ENCODE measurements at regions of chr20 and their contacts with region 1.

Region 1: DNA sequence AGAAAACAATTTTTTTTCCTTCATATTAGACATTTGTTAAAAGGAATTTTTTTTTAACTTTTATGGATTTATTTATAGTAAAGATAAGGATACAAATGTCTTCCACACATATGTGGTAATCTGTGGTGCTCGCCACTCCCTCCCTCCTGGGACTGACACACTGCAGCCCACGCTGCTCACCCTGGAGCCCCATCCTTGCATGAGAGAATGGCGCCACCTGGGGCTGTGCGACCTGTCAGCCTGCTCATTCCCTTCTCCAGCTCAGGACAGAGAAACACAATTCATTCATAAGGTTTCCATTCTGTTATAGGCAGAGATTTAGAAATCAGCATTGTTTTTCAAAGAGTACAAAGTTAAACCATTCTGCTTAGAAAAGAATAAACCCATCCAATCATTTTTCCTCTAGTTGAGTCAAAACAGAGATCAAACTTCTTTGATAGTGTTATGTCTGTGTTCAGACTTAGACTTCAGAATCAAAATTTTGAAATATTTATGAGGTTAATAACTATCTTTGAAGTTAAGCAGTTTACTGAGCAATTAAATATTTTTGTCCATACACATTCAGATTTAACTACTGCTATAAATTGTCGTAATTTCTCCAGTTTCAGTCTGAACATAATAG is 42.8 kb upstream of the DYNLRB1 start:
- DNase-seq: no peak
- ATAC-seq: peak; percentile 89
- H3K4me3 ChIP-seq: no peak overlapping the region
- H3K27ac ChIP-seq: no peak overlapping the region
- H3K4me1 ChIP-seq: no peaks in the 10 kb centered on the region
- H3K27me3 ChIP-seq: no peaks in the 10 kb centered on the region
- CTCF ChIP-seq: peak; percentile 70

Region 2: DNA sequence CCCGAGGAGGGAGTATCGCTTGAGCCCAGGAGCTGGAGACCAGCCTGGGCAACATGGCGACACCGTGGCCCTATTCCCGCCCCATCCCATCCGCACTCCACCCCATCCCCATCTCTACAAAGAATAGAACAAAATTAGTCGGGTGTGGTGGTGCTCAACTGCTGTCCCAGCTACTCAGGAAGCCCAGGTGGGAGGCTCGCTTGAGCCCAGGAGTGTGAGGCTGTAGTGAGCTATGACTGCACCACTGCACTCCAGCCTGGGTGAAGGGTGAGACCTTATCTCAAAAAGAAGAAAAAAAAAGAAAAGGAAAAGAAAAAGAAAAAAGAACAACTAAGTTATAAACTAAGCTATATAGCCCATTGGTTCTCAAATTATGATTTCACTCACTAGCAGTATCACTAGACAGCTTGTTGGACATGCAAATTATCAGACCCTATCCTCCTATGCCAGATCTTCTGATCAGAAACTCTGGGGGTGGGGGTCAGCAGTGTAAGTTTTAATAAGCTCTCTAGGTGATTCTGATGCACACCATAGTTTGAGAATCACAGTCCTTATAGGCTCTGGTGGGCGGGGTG is 110.8 kb before region 1 on chr20:
- CTCF ChIA-PET with region 1: no interaction called
- POLR2A ChIA-PET with region 1: no interaction called
- in situ Hi-C with region 1: no loop called
- intact Hi-C with region 1: no loop called
- DNase-seq: no peak
- ATAC-seq: no peak
- H3K4me3 ChIP-seq: peak overlapping the region; percentile 86 to 89
- H3K27ac ChIP-seq: peak overlapping the region; percentile 87
- H3K4me1 ChIP-seq: peaks cover 19% of the 10 kb centered on the region
- H3K27me3 ChIP-seq: no peaks in the 10 kb centered on the region
- CTCF ChIP-seq: no peak

Region 3: DNA sequence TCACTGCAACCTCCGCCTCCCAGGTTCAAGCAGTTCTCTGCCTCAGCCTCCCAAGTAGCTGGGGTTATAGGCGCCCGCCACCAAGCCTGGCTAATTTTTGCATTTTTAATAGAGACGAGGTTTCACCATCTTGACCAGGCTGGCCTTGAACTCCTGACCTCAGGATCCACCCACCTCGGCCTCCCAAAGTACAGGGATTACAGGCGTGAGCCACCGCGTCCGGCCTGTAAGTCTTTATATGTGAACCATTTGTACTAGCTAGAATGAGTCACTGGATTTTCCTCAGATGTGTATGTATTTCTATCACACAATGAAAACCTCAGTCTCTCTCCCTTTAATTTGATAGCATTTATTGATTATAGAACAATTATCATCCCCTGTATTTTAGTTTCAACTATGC is 76.3 kb before region 1 on chr20:
- CTCF ChIA-PET with region 1: no interaction called
- POLR2A ChIA-PET with region 1: interaction called, 11 read pairs
- in situ Hi-C with region 1: no loop called
- intact Hi-C with region 1: no loop called
- DNase-seq: no peak
- ATAC-seq: no peak
- H3K4me3 ChIP-seq: no peak overlapping the region
- H3K27ac ChIP-seq: no peak overlapping the region
- H3K4me1 ChIP-seq: peaks cover 5% of the 10 kb centered on the region
- H3K27me3 ChIP-seq: no peaks in the 10 kb centered on the region
- CTCF ChIP-seq: no peak

Region 4: GRCh38 chr20:34516247-34517113 is 43.1 kb after region 1 on chr20 and contains the start of gene DYNLRB1:
- CTCF ChIA-PET with region 1: interaction called, 10 read pairs
- POLR2A ChIA-PET with region 1: no interaction called
- in situ Hi-C with region 1: no loop called
- intact Hi-C with region 1: no loop called
- DNase-seq: peak; percentile 77
- ATAC-seq: peak; percentile 93
- H3K4me3 ChIP-seq: peak within 1 kb of the TSS; percentile 70 to 98
- H3K27ac ChIP-seq: peak within 1 kb of the TSS; percentile 92
- H3K4me1 ChIP-seq: peaks cover 9% of the 10 kb centered on the region
- H3K27me3 ChIP-seq: no peaks in the 10 kb centered on the region
- CTCF ChIP-seq: no peak
- total RNA-seq, gene DYNLRB1: 155 TPM

Region 5: DNA sequence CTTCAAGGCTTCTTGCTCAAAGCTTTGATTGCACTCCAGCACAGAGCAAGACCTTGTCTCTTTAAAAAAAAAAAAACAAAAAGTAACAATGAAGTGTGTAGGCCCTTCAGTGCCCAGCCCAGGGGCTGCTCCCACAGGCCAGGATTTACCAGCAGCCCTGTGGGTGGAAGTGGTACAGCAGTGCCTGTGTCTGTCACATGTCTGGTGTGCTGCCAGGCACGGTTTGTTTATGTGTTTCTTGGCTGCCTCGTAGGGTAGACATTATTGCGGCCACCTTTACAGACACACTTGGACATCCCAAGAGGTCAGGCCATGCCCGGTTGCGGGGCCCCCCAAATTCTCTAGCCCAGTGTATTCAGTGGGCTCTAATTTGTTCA is 55.5 kb after region 1 on chr20:
- CTCF ChIA-PET with region 1: no interaction called
- POLR2A ChIA-PET with region 1: no interaction called
- in situ Hi-C with region 1: no loop called
- intact Hi-C with region 1: no loop called
- DNase-seq: no peak
- ATAC-seq: no peak
- H3K4me3 ChIP-seq: no peak overlapping the region
- H3K27ac ChIP-seq: no peak overlapping the region
- H3K4me1 ChIP-seq: peaks cover 31% of the 10 kb centered on the region
- H3K27me3 ChIP-seq: no peaks in the 10 kb centered on the region
- CTCF ChIP-seq: no peak